ENCODE measurements at regions of chr19 and their contacts with region 1.

Region 1: DNA sequence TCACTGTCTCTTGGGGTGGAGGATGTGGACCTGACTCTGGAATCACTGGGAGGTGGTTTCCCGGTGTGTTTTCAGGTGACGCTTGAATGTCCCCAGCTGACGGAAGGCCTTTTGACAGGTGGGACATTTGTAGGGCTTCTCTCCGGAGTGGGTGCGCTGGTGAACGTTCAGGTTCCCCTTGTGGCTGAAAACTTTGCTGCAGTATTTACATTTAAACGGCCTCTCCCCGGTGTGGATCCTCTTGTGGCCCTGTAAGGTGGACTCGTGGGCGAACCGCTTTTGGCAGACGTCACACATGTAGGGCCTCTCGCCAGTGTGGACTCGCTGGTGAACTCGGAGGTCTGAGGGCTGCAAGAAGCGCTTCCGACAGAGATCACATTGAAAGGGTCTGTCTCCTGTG is 7.8 kb downstream of the ZSCAN5B start:
- DNase-seq: no peak
- ATAC-seq: no peak
- H3K4me3 ChIP-seq: no peak overlapping the region
- H3K27ac ChIP-seq: no peak overlapping the region
- H3K4me1 ChIP-seq: no peaks in the 10 kb centered on the region
- H3K27me3 ChIP-seq: no peaks in the 10 kb centered on the region
- CTCF ChIP-seq: no peak

Region 2: DNA sequence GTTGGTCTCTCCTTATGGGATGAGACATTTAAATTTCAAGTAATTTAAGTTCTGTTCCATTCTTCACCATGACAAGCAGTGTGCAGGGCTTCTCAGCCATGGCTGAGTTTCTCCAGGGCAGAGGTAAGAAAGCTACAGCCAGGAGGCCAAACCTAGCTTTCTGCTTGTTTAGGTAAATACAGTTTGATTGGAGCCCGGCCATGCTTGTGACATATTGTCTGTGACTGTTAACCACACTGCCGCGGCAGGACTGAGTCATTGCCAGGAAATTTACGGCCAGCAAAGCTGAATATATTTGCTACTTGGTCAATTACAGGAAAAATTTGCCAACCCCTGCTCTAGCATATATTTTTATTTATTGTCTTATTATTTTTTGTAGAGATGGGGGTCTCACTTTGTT is 231.4 kb before region 1 on chr19:
- intact Hi-C with region 1: no loop called
- DNase-seq: no peak
- ATAC-seq: no peak
- H3K4me3 ChIP-seq: no peak overlapping the region
- H3K27ac ChIP-seq: no peak overlapping the region
- H3K4me1 ChIP-seq: no peaks in the 10 kb centered on the region
- H3K27me3 ChIP-seq: peaks cover 3% of the 10 kb centered on the region
- CTCF ChIP-seq: no peak

Region 3: GRCh38 chr19:56076498-56076897 is 113.3 kb before region 1 on chr19:
- intact Hi-C with region 1: loop called (anchors 10 kb)
- DNase-seq: no peak
- ATAC-seq: peak; percentile 72 to 77
- H3K4me3 ChIP-seq: no peak overlapping the region
- H3K27ac ChIP-seq: no peak overlapping the region
- H3K4me1 ChIP-seq: peaks cover 9% of the 10 kb centered on the region
- H3K27me3 ChIP-seq: no peaks in the 10 kb centered on the region
- CTCF ChIP-seq: peak; percentile 79